Activated naive CD4-positive, alpha-beta T cell treated with anti-CD3 and anti-CD28 coated beads for 36 hours (primary cell): ENCODE measurements at regions of chr10 and their contacts with region 1.

Region 1: GRCh38 chr10:110746254-110746826 is 102.2 kb downstream of the RBM20 start:
- DNase-seq: peak; percentile 64
- H3K4me3 Mint-ChIP-seq: no peak overlapping the region
- H3K27ac Mint-ChIP-seq: no peak overlapping the region
- H3K4me1 Mint-ChIP-seq: peaks cover 72% of the 10 kb centered on the region
- H3K27me3 Mint-ChIP-seq: no peaks in the 10 kb centered on the region

Region 2: DNA sequence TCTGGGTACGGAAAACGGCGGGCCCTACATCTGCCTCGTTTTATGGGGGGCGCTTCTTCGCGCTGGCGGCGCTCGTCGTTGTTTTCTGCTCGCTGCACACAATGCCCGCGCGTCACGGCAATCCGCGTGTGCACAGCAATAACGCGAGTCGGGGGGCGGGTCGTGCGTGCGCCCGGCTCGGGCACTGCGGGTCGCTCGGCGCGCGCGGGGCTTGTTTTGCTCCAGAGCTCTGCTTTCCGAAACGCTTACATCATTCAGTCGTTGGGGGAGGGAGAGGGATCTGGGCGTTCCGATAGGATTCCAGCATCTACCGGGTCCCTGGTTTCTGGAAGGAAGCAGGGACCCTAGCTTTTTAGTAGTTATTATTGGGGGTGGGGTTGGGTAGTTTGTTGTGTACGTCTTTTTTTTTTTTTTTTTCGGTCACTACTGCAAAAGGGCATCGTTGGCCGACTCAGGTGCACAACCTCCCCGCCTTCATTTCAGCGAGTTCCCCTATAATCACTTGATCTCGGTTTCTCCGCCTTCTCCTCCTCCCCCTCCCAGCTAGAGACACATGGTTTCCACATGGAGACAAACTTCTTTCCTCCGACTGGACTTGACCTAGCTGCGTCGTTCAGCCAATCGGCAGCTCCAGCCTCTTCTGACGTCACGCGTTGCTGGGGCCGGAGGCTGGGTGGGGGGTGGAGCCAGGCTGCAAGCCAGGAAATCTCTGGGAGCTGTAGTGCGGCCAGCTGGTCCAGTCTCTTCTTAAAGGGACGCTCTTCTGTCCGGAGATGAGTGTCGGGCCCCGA is 535.5 kb before region 1 on chr10:
- CTCF ChIA-PET with region 1: no interaction called
- intact Hi-C with region 1: no loop called
- DNase-seq: peak; percentile 97
- H3K4me3 Mint-ChIP-seq: peak overlapping the region; percentile 96
- H3K27ac Mint-ChIP-seq: peak overlapping the region; percentile 97
- H3K4me1 Mint-ChIP-seq: peaks cover 50% of the 10 kb centered on the region
- H3K27me3 Mint-ChIP-seq: peaks cover 3% of the 10 kb centered on the region

Region 3: DNA sequence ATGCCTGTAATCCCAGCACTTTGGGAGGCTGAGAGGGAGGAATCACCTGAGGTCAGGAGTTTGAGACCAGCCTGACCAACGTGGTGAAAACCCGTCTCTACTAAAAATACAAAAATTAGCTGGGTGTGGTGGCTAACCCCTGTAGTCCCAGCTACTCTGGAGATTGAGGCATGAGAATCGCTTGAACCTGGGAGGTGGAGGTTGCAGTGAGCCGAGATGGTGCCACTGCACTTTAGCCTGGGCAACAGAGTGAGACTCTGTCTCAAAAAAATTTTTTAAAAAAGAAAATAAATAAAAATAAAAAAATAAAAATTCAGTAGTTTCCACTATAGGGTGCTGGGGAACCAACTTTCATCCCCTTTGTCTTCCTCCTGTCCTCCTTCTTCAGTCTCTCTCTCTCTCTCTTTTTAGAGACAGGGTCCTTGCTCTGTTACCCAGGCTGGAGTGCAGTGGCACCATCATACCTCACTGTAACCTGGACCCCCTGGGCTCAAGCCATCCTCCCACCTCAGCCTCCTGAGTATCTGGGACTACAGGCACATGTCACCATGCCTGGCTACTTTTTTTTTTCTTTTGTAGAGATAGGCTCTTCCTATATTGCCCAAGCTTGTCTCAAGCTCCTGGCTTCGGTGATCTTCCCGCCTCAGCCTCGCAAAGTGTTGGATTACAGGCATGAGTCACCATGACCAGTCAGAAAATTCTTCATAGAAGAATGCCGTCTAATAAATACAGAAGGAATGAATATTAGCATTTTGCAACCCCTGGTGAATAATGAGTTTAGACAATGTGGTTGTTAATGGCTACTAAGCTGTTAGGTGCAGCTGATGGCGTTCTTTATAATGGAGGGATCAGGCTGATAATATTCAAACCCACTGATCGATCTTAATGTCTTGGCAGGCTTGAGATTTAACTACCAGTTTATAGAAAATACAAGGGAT is 81.6 kb before region 1 on chr10:
- CTCF ChIA-PET with region 1: no interaction called
- intact Hi-C with region 1: no loop called
- DNase-seq: no peak
- H3K4me3 Mint-ChIP-seq: no peak overlapping the region
- H3K27ac Mint-ChIP-seq: no peak overlapping the region
- H3K4me1 Mint-ChIP-seq: peaks cover 5% of the 10 kb centered on the region
- H3K27me3 Mint-ChIP-seq: no peaks in the 10 kb centered on the region

Region 4: GRCh38 chr10:110803830-110804338 is 57.5 kb after region 1 on chr10:
- CTCF ChIA-PET with region 1: interaction called, 17 read pairs
- intact Hi-C with region 1: loop called (anchors 1 kb)
- DNase-seq: peak; percentile 59
- H3K4me3 Mint-ChIP-seq: no peak overlapping the region
- H3K27ac Mint-ChIP-seq: peak overlapping the region; percentile 47
- H3K4me1 Mint-ChIP-seq: peaks cover 34% of the 10 kb centered on the region
- H3K27me3 Mint-ChIP-seq: no peaks in the 10 kb centered on the region

Region 5: GRCh38 chr10:110893559-110894179 is 147.3 kb after region 1 on chr10:
- CTCF ChIA-PET with region 1: interaction called, 10 read pairs
- intact Hi-C with region 1: loop called (anchors 1 kb)
- DNase-seq: no peak
- H3K4me3 Mint-ChIP-seq: no peak overlapping the region
- H3K27ac Mint-ChIP-seq: no peak overlapping the region
- H3K4me1 Mint-ChIP-seq: peaks cover 42% of the 10 kb centered on the region
- H3K27me3 Mint-ChIP-seq: no peaks in the 10 kb centered on the region

Region 6: GRCh38 chr10:110977662-110978061 is 231.3 kb after region 1 on chr10:
- CTCF ChIA-PET with region 1: no interaction called
- intact Hi-C with region 1: no loop called
- DNase-seq: no peak
- H3K4me3 Mint-ChIP-seq: no peak overlapping the region
- H3K27ac Mint-ChIP-seq: no peak overlapping the region
- H3K4me1 Mint-ChIP-seq: peaks cover 50% of the 10 kb centered on the region
- H3K27me3 Mint-ChIP-seq: no peaks in the 10 kb centered on the region

Region 7: DNA sequence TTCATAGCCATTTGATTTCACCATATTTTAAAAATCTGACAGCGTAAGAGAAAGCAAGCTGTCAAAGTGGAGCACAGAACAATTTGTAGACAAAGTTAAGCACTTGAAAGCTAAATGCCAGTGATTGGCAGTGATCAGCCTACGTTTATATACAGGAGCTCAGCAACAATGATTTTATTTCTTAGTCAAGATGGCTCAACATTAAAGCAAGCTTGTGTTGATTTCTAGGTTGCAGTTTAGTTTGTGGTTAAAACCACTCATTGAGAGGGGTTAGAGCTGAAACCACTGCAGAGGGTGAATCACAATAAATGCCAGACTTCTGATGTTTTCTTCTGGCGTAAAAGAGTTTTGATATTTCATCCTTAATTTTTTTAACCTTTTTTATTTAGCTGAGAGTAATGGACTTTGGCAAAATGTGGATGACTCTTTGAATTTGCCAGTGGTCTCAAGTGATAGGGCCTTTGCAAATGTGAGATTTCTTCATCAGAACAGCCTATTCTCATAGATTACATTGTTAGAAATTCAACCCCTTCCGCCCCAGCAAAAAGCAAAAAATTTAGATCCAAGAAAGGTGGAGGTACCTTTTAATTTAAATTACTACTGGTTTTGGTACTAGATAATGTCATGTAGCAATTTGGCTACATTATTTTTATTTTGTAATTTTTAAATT is 246.8 kb after region 1 on chr10:
- CTCF ChIA-PET with region 1: no interaction called
- intact Hi-C with region 1: loop called (anchors 1 kb)
- DNase-seq: peak; percentile 21
- H3K4me3 Mint-ChIP-seq: no peak overlapping the region
- H3K27ac Mint-ChIP-seq: no peak overlapping the region
- H3K4me1 Mint-ChIP-seq: peaks cover 23% of the 10 kb centered on the region
- H3K27me3 Mint-ChIP-seq: no peaks in the 10 kb centered on the region

Region 8: DNA sequence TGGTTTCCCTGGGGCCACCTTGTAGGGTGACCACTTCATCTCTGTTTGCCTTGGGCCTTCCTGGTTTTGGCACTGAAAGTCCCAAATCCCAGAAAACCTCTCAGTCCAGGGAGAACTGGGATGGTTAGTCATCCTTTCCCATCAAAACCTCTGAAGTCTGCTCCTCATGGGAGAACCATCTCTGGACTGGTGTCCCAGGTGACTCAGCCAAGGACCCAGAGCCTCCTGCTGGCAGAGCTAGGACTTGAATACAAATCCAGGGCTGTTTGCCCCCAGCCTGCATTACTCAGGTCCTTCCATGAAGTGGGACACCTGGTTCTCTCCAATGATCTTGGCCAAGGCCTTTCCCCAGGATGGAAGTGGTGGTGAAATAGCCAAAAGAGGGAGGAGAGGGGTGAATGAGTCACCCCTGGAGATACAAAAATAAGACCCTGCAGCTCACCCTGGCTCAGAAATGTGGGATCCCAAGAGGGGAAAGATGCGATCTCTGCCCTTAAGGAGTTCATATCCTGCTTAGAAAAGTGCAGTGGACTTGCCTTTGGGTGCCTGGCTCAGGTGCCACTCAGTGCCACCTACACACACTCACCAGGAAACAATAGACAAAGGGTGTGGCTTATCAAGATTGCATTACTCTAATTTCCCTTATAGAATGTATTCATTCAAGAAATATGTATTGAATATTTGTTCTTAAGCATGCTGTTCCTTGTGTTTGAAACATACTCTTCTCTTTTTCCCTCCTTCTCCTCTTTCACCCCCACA is 352.5 kb after region 1 on chr10:
- CTCF ChIA-PET with region 1: no interaction called
- intact Hi-C with region 1: loop called (anchors 1 kb)
- DNase-seq: no peak
- H3K4me3 Mint-ChIP-seq: no peak overlapping the region
- H3K27ac Mint-ChIP-seq: no peak overlapping the region
- H3K4me1 Mint-ChIP-seq: no peaks in the 10 kb centered on the region
- H3K27me3 Mint-ChIP-seq: peaks cover 10% of the 10 kb centered on the region

Region 9: GRCh38 chr10:111360260-111360925 is 614.1 kb after region 1 on chr10:
- CTCF ChIA-PET with region 1: no interaction called
- intact Hi-C with region 1: loop called (anchors 1 kb)
- DNase-seq: peak; percentile 35
- H3K4me3 Mint-ChIP-seq: no peak overlapping the region
- H3K27ac Mint-ChIP-seq: no peak overlapping the region
- H3K4me1 Mint-ChIP-seq: no peaks in the 10 kb centered on the region
- H3K27me3 Mint-ChIP-seq: peaks cover 13% of the 10 kb centered on the region